CD14-positive monocyte (primary cell): ENCODE measurements at regions of chr14 and their contacts with region 1.

Region 1: DNA sequence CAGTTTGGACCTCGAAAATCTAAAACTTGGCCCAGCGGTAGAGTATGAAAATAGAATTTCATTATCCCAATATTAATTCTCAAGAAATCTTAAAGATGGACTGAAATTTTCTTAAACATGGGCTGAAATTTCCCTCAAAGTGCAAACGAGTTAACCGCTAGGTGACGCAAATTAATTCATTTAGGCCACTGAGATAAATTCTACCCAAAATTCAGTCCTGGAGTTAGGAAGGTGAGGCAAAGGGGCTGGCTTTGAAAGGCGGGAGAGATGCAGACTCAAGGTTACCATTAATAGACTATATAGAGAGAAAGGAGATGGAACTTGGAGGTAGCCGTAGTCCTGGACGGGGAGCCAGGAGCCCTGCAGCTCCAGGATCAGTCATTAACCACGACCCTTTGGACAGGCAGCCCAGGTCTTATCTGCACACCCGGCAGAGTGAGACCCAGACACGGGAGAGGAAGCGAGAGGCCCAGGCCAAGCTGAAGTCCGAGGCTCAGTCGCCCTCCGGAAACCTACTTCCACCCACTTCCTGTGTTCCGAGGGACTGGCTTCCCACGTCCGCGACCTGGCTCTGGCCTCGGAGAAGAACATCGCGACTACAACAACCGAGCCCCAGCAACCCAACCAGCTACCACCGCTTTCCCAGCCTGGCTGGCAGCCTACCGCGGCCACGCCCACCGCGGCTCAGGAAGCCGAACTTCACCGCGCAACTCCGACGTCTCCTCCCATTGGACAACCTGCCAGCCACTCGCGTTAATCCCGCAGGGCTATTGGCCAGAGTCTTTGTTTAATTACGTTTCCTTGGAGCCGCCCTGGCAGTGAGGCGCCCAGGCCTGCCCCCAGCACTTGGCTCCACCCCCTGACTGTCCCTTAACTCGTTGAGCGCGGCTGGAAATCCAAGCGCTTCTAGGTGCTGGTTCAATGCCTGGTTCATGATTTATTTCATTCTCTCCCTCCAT is at the start of gene EFCAB11:
- DNase-seq: peak; percentile 95 to 97 (median 95)
- H3K4me3 ChIP-seq: peak within 1 kb of the TSS; percentile 75 to 90 (median 76)
- H3K4me3 Mint-ChIP-seq: peak within 1 kb of the TSS; percentile 96 to 100
- H3K27ac ChIP-seq: peak within 1 kb of the TSS; percentile 97 to 99
- H3K27ac Mint-ChIP-seq: peak within 1 kb of the TSS; percentile 92 to 97 (median 96)
- H3K4me1 ChIP-seq: peaks cover 20 to 22% of the 10 kb centered on the region in 2 donors
- H3K4me1 Mint-ChIP-seq: peaks cover 31% of the 10 kb centered on the region
- H3K27me3 ChIP-seq: no peaks in the 10 kb centered on the region
- H3K27me3 Mint-ChIP-seq: peaks cover 0 to 3% (median 0%) of the 10 kb centered on the region in 3 donors
- CTCF ChIP-seq: no peak
- polyA plus RNA-seq, gene EFCAB11: 2.0 to 4.3 (median 2.1) TPM

Region 2: DNA sequence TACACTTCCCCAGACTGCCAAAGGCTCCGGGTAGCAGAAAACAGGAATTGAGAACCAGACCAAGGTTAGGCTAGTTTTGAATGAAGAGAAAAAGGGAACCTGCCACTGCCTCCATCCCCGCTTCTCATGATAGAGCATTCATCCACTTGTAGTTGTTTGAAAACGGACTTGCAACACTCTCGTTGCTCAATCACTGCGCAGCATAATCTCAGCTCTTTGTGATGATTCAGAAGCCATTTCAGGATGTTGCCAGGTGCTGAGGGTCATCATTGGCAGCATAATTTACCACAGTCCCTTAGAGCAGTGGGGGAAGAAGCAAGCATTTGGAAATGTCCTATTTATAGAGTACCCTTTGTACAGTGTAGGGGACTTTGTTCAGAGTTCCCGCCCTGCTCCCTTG is 133.1 kb after region 1 on chr14:
- intact Hi-C with region 1: loop called in 1 of 2 experiments (anchors 10 kb)
- DNase-seq: peak; percentile 98 to 100 (median 99)
- H3K4me3 ChIP-seq: no peak overlapping the region
- H3K4me3 Mint-ChIP-seq: no peak overlapping the region
- H3K27ac ChIP-seq: peak overlapping the region; percentile 49 to 52
- H3K27ac Mint-ChIP-seq: peak overlapping the region; percentile 63 to 87 (median 85)
- H3K4me1 ChIP-seq: peaks cover 24 to 28% of the 10 kb centered on the region in 2 donors
- H3K4me1 Mint-ChIP-seq: peaks cover 33% of the 10 kb centered on the region
- H3K27me3 ChIP-seq: no peaks in the 10 kb centered on the region
- H3K27me3 Mint-ChIP-seq: peaks cover 0 to 8% (median 6%) of the 10 kb centered on the region in 3 donors
- CTCF ChIP-seq: no peak

Region 3: GRCh38 chr14:90383075-90383730 is 428.9 kb after region 1 on chr14:
- intact Hi-C with region 1: loop called in 1 of 2 experiments (anchors 10 kb)
- DNase-seq: peak; percentile 99 to 100 (median 99)
- H3K4me3 ChIP-seq: peak overlapping the region; percentile 55 to 97 (median 87)
- H3K4me3 Mint-ChIP-seq: no peak overlapping the region
- H3K27ac ChIP-seq: peak overlapping the region; percentile 98 to 100
- H3K27ac Mint-ChIP-seq: no peak overlapping the region
- H3K4me1 ChIP-seq: peaks cover 18 to 25% of the 10 kb centered on the region in 2 donors
- H3K4me1 Mint-ChIP-seq: peaks cover 14% of the 10 kb centered on the region
- H3K27me3 ChIP-seq: no peaks in the 10 kb centered on the region
- H3K27me3 Mint-ChIP-seq: peaks cover 0 to 3% (median 1%) of the 10 kb centered on the region in 3 donors
- CTCF ChIP-seq: no peak

Region 4: DNA sequence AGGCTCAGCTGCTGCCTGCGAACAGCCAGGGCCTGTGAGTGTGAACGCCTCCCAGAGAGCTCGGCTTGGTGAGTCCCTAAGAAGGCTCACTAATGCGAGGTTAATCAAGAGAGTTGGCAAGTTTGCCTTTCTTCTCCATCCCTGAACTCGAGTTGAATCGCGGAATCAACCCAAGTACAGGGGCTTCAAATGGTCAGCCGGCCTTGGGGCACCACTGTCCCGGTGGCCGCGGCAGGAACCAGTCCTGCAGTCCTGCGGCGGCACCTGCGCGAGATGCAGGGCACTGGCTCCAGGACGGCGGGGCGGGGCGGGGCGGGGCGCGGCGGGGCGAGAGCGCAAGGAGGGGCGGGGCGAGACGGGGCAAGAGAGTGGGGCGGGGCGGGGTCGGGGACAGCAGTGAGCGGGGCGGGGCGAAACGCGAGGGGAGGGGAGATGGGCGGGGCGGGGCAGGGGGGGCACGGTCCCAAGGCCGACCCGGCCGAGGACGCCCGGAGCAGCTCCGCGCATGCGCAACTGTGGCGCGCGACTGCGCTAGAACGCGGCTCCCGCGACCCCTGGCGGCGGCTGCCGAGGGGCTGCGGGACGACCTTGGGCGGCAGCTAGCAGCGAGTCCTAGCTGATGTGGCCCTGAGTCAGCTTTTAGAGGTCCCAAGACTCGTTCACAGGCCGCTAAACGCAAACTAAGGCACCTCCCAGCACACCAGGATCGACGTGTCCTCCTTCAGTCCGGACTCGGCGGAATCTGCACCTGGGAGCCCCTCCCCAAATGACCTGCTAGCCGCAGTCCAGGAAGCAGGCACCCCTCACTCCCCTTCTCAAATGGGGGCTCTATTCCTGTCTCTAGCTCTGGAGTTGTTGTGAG is 803.9 kb after region 1 on chr14:
- intact Hi-C with region 1: loop called in 1 of 2 experiments (anchors 5 kb)
- DNase-seq: peak; percentile 94 to 95 (median 95)
- H3K4me3 ChIP-seq: peak overlapping the region; percentile 51 to 80 (median 75)
- H3K4me3 Mint-ChIP-seq: peak overlapping the region; percentile 80 to 88
- H3K27ac ChIP-seq: peak overlapping the region; percentile 47 to 86
- H3K27ac Mint-ChIP-seq: peak overlapping the region; percentile 35 to 87 (median 76)
- H3K4me1 ChIP-seq: peaks cover 15% of the 10 kb centered on the region in 2 donors
- H3K4me1 Mint-ChIP-seq: peaks cover 15% of the 10 kb centered on the region
- H3K27me3 ChIP-seq: no peaks in the 10 kb centered on the region
- H3K27me3 Mint-ChIP-seq: peaks cover 4 to 8% (median 5%) of the 10 kb centered on the region in 3 donors
- CTCF ChIP-seq: peak; percentile 86